AG04450 (cell line): ENCODE measurements at regions of chr19 and their contacts with region 1.

Region 1: GRCh38 chr19:46413262-46414031 is at the start of gene CCDC8:
- DNase-seq: peak; percentile 87
- H3K4me3 ChIP-seq: peak within 1 kb of the TSS; percentile 74
- H3K27ac ChIP-seq: peak within 1 kb of the TSS; percentile 65
- H3K27me3 ChIP-seq: peaks cover 3% of the 10 kb centered on the region
- CTCF ChIP-seq: no peak
- polyA plus RNA-seq, gene CCDC8: 9.2 and 10.5 TPM in 2 replicates

Region 2: DNA sequence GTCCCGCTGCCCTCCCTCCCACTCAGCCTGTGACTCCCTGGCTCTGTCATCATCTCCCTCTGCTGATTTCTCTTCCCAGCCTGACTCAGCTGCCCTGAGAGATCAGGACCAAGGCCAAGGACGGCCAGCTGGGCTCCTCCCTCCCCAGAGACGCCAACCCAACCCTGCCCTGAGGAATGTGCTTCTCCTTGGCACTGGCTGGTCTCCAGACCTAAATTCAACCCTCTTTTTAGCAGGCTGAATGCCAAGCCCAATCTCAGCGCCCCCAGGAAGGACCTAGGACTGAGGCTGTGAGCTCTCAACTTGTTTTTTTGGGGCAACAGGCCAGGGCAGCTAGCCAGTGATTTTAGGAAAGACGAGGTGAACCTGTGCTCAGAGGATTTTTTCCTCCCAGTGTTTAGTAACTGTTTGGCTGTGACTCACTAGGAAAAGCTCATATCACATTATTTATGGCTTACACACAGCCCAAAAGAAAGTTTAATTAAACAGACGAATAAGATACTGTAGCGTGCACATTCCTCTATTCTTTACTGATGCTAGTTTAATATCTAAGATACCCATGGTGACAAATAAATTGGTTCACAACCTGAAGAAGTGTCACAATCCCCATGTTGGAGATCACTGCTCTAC is 191.4 kb before region 1 on chr19:
- CTCF ChIA-PET with region 1: no interaction called
- POLR2A ChIA-PET with region 1: no interaction called
- DNase-seq: no peak
- H3K4me3 ChIP-seq: no peak overlapping the region
- H3K27ac ChIP-seq: no peak overlapping the region
- H3K27me3 ChIP-seq: peaks cover 9% of the 10 kb centered on the region
- CTCF ChIP-seq: no peak

Region 3: DNA sequence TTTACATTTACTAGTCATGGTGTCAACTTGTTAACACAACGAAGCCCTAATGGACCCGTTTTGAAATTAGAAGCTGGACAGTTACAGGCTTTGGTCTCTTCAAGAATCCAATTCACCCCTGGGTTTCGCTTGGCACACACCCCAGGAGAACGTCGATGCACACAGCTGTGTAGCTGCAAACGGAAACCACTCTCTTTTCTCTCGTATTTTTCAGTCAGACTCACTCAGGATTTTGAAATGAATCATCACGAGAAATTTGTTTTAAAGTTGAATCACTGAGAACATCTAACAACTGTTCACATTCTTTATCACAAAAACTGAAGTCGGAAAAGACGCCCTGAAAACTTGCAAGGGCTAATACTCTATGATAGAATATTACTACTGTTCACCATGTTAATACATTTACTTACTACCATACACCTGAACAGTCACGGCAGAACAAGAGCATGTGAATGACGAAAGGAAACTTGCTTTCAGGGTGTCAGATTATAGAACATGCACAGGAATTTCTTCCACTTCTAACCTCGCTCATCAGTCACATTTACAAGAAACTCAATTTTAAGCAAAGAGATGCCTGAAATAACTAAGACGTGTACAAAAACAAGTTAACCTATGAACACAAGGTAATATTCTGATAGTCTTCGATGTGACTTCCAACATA is 53.2 kb after region 1 on chr19:
- CTCF ChIA-PET with region 1: no interaction called
- POLR2A ChIA-PET with region 1: interaction called, 10 read pairs
- DNase-seq: peak; percentile 80
- H3K4me3 ChIP-seq: no peak overlapping the region
- H3K27ac ChIP-seq: peak overlapping the region; percentile 33
- H3K27me3 ChIP-seq: no peaks in the 10 kb centered on the region
- CTCF ChIP-seq: no peak

Region 4: DNA sequence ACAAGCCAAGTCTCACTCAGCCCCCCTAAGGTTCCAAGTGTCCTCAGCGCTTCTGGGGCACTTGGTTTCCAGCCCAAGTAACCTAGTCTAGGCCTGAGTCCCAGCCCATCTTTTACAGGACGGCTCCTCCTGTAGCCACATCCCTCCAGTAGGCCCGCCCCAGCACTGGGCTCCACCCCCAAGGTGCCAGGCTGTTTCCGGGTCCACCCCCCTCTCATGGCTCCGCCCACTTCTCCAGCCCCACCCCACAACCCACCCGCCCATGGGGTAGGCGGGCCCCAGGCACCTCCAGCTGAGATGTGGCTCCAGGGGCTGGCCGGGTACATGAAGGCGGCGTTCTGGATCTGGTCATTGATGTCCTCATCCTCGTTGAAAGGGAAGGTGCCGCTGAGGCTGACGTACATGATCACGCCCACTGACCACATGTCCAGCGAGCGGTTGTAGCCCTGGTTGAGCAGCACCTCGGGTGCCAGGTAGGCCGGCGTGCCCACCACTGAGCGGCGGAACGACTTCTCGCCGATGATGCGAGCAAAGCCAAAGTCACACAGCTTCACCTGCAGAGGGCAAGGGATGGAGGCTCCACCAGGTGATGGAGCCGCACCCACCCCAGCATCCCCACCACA is 264.8 kb after region 1 on chr19:
- CTCF ChIA-PET with region 1: no interaction called
- POLR2A ChIA-PET with region 1: no interaction called
- DNase-seq: no peak
- H3K4me3 ChIP-seq: no peak overlapping the region
- H3K27ac ChIP-seq: no peak overlapping the region
- H3K27me3 ChIP-seq: no peaks in the 10 kb centered on the region
- CTCF ChIP-seq: no peak